Calu3 (cell line): ENCODE measurements at regions of chr9 and their contacts with region 1.

Region 1: GRCh38 chr9:27571011-27571410 is 2.3 kb downstream of the C9orf72 start:
- DNase-seq: no peak
- H3K4me3 Mint-ChIP-seq: no peak overlapping the region
- H3K27ac Mint-ChIP-seq: no peak overlapping the region
- H3K4me1 Mint-ChIP-seq: no peaks in the 10 kb centered on the region
- H3K27me3 Mint-ChIP-seq: no peaks in the 10 kb centered on the region
- CTCF ChIP-seq: no peak

Region 2: DNA sequence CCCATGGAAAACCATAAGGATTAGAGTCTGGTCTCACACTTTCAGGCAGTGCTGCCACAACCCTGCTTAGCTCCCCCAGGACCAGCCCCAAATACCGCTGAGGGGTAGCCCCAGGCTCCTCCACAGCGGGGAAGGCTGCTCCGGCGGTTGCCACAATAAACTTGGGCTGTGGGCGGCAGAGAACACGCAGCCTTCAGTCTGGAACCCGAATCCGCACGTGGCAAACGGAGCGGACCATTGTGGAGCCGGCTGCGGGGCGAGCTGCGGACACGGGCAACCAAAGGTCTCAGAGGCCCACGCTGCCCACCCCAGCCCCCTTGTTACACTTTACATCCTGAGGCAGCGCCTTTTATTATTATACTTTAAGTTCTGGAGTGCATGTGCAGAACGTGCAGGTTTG is 39.6 kb after region 1 on chr9:
- CTCF ChIA-PET with region 1: no interaction called
- intact Hi-C with region 1: no loop called
- DNase-seq: no peak
- H3K4me3 Mint-ChIP-seq: no peak overlapping the region
- H3K27ac Mint-ChIP-seq: no peak overlapping the region
- H3K4me1 Mint-ChIP-seq: no peaks in the 10 kb centered on the region
- H3K27me3 Mint-ChIP-seq: peaks cover 32% of the 10 kb centered on the region
- CTCF ChIP-seq: no peak

Region 3: DNA sequence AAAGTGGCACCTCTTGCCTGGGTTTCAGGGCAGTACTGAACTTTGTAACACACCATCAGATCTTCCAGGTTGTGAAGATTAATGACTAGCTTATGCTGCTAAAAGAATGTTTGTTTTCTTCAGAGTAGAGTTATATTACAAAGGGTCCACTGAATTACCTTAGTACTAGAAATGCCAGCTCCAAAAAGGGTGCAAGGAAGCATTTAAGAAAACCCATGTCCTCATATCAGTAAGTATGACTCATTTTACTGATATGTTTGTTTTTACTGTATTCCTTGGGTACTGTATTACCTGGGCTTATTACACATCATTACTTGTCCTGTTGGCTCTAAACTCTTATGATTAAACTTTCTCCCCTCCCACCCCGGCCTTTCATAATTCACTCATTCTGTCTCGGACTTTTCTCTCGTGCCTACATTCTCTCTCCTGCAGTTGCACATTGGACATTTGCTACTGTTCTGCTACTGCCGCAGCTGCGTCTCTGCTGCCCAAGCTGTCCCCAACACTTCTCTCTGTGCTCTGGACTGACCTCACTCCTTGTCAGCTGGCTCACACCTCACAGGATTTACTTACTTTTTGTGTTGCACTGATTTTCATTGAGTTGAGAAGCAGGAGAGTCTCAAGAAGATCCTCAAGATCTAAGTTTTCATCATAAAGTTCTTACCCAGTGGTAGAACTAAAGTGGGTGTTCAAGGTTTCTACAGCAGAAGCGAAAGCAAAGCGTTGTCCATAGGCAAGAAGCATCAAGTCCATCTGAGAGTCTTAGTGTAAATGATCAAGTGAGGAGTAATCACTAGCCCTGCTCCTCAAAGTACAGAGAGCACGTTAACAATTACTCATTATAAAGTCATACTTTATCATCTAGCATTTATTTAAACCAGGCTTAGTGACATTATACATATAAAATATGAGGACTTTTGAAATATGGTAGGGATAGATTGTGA is 55.5 kb after region 1 on chr9:
- CTCF ChIA-PET with region 1: no interaction called
- intact Hi-C with region 1: loop called (anchors 2 kb)
- DNase-seq: peak; percentile 47
- H3K4me3 Mint-ChIP-seq: peak overlapping the region; percentile 55
- H3K27ac Mint-ChIP-seq: peak overlapping the region; percentile 60
- H3K4me1 Mint-ChIP-seq: peaks cover 70% of the 10 kb centered on the region
- H3K27me3 Mint-ChIP-seq: no peaks in the 10 kb centered on the region
- CTCF ChIP-seq: no peak